ENCODE measurements at regions of chr12 and their contacts with region 1.

Region 1: DNA sequence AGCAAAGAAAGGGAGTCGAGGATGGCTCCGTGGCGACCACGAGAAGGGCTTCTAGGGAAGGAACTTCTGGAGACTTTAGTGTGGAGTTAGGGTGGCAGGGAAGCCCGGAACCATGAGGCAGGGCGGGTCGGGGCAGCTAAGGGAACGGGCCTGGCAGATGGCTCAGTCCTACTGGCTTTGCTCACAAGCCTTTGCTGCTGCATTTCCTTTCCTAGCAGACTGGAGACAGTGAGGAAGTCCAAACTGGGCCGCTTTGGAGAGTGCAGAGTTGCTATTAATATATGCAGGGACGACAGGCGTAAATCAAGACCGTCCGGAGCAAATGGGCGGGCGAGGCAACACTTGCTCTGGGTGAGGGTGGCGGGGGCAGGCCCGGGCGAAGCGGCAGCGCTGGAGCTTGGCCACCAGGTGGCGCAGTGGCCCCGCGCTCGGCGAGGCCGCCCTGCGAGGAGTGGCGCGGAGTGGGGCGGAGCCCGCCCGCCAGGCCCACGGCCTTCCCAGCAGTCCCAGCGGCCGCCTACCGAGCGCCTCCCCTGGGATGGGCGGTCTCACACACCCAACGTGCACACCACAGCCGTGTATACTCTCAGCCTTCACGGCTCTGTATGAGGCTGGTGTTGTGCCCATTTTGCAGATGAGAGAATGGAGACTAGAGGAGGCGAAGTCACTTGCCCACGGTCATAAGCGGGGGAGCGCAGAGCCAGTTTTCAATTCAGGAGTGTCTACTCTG is 24.4 kb upstream of the LRTM2 start:
- DNase-seq: peak; percentile 94
- H3K4me3 Mint-ChIP-seq: peak overlapping the region; percentile 81
- H3K27ac Mint-ChIP-seq: peak overlapping the region; percentile 83
- H3K4me1 Mint-ChIP-seq: peaks cover 15% of the 10 kb centered on the region
- H3K27me3 Mint-ChIP-seq: no peaks in the 10 kb centered on the region

Region 2: GRCh38 chr12:1650260-1650977 is 145.5 kb before region 1 on chr12:
- CTCF ChIA-PET with region 1: interaction called, 255 read pairs
- intact Hi-C with region 1: loop called (anchors 1 kb)
- DNase-seq: no peak
- H3K4me3 Mint-ChIP-seq: no peak overlapping the region
- H3K27ac Mint-ChIP-seq: no peak overlapping the region
- H3K4me1 Mint-ChIP-seq: peaks cover 1% of the 10 kb centered on the region
- H3K27me3 Mint-ChIP-seq: peaks cover 2% of the 10 kb centered on the region

Region 3: GRCh38 chr12:1690578-1691122 is 105.3 kb before region 1 on chr12 and contains the start of gene ADIPOR2:
- CTCF ChIA-PET with region 1: interaction called, 18 read pairs
- intact Hi-C with region 1: no loop called
- DNase-seq: peak; percentile 95
- H3K4me3 Mint-ChIP-seq: peak within 1 kb of the TSS; percentile 97
- H3K27ac Mint-ChIP-seq: peak within 1 kb of the TSS; percentile 97
- H3K4me1 Mint-ChIP-seq: peaks cover 48% of the 10 kb centered on the region
- H3K27me3 Mint-ChIP-seq: no peaks in the 10 kb centered on the region
- total RNA-seq, gene ADIPOR2: 31.1 to 34.8 TPM

Region 4: GRCh38 chr12:1932264-1932777 is 136.4 kb after region 1 on chr12:
- CTCF ChIA-PET with region 1: no interaction called
- intact Hi-C with region 1: no loop called
- DNase-seq: no peak
- H3K4me3 Mint-ChIP-seq: no peak overlapping the region
- H3K27ac Mint-ChIP-seq: no peak overlapping the region
- H3K4me1 Mint-ChIP-seq: peaks cover 3% of the 10 kb centered on the region
- H3K27me3 Mint-ChIP-seq: no peaks in the 10 kb centered on the region

Region 5: GRCh38 chr12:2004113-2004929 is 208.4 kb after region 1 on chr12 and contains the start of gene DCP1B:
- CTCF ChIA-PET with region 1: interaction called, 3 read pairs
- intact Hi-C with region 1: loop called (anchors 1 kb)
- DNase-seq: peak; percentile 98
- H3K4me3 Mint-ChIP-seq: peak within 1 kb of the TSS; percentile 88
- H3K27ac Mint-ChIP-seq: peak within 1 kb of the TSS; percentile 96
- H3K4me1 Mint-ChIP-seq: peaks cover 23% of the 10 kb centered on the region
- H3K27me3 Mint-ChIP-seq: no peaks in the 10 kb centered on the region
- total RNA-seq, gene DCP1B: 13.1 to 13.5 TPM

Region 6: GRCh38 chr12:2256915-2257314 is 461.0 kb after region 1 on chr12:
- CTCF ChIA-PET with region 1: no interaction called
- intact Hi-C with region 1: no loop called
- DNase-seq: no peak
- H3K4me3 Mint-ChIP-seq: no peak overlapping the region
- H3K27ac Mint-ChIP-seq: no peak overlapping the region
- H3K4me1 Mint-ChIP-seq: no peaks in the 10 kb centered on the region
- H3K27me3 Mint-ChIP-seq: no peaks in the 10 kb centered on the region

Region 7: GRCh38 chr12:2284857-2285256 is 488.9 kb after region 1 on chr12:
- CTCF ChIA-PET with region 1: no interaction called
- intact Hi-C with region 1: loop called (anchors 2 kb)
- DNase-seq: peak; percentile 58
- H3K4me3 Mint-ChIP-seq: no peak overlapping the region
- H3K27ac Mint-ChIP-seq: no peak overlapping the region
- H3K4me1 Mint-ChIP-seq: peaks cover 2% of the 10 kb centered on the region
- H3K27me3 Mint-ChIP-seq: peaks cover 22% of the 10 kb centered on the region

Region 8: DNA sequence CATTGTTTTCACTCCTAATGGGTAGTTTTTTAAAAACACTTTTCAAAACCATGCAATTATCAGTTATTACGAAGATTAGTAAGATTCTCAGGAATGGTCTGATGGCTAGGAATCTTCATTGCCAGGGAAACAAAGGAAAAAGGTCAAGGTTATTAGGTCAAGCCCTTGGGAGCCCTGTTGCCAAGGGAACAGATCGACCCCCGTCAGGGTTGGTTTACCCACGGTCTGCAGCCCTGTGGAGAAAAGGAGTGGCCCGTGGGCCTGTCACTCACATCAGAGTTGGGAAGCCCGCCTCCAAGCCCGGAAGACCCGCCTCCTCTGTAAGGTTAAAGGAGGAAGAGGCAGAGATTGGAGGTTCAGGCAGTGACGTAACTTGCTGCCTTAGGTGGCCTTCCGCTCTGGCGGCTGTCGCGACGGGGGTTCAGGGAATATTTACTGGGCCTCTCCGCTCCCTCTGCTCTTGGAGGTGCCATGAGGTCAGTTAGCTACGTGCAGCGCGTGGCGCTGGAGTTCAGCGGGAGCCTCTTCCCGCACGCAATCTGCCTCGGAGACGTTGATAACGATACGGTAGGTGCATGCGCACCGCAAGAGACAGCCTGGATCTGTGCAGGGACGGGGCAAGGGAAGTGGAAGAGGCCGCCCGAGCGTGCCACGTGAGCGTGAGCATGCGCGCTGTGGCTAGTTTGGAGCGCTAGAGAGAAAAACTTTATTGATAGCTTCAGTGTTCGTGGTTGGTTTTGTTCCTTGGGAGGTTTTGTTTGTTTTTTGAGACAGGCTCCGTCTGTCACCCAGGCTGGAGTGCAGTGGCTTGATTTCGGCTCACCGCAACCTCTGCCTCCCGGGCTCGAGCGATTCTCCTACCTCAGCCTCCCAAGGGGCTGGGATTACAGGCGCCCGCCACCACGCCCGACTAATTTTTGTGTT is 1016.6 kb after region 1 on chr12 and contains the start of gene ITFG2:
- CTCF ChIA-PET with region 1: no interaction called
- intact Hi-C with region 1: loop called (anchors 2 kb)
- DNase-seq: peak; percentile 98
- H3K4me3 Mint-ChIP-seq: peak within 1 kb of the TSS; percentile 99
- H3K27ac Mint-ChIP-seq: peak within 1 kb of the TSS; percentile 98
- H3K4me1 Mint-ChIP-seq: peaks cover 25% of the 10 kb centered on the region
- H3K27me3 Mint-ChIP-seq: no peaks in the 10 kb centered on the region
- total RNA-seq, gene ITFG2: 27.5 to 30.5 TPM